Activated T-helper 2 cell treated with anti-CD3 and anti-CD28 coated beads, Interferon-gamma antibody, Interleukin-2, Interleukin-4, amounts not matched to agents 10 μg/mL and 5 μg/mL and 100 μg/mL, durations not matched to agents 14 hours and 24 hours and 36 hours (primary cell): ENCODE measurements at regions of chr14 and their contacts with region 1.

Region 1: DNA sequence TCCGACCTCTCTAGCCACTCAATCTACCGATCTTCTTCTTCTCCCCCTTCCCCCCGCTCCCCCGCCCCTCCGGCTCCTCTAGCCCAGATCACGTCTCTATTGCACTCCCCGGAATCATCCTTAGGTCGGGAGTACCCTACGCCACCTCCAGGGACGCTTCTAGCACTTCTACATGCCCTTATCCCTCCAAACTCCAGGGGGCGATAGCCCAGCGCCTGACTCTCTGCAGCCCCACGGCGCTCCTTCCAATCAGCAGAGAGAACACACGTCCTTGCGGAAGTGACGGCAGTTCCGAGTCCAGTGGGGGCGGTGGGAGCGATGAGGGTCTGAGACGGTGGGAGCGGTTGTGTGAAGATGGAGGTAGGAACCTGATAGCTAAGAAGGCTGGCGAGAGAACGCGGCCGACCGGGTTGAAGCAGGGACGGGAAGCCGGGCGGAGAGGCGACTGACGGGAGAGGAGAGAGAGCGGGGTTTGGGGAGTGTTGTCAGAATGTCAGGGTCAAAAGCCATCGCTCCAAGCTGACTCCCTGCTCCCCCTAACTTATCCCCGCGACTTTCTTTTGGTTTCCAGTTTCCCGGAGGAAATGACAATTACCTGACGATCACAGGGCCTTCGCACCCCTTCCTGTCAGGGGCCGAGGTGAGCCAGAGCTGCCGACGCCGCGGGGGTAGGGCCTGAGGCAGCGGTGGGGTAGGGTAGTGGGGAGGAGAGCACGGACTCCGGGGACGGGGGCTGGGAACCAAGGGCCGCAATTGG is at the starts of genes RAB2B and TOX4:
- DNase-seq: peak; percentile 97
- H3K4me3 Mint-ChIP-seq: peak within 1 kb of the TSS; percentile 99
- H3K27ac Mint-ChIP-seq: peak within 1 kb of the TSS; percentile 99
- H3K4me1 Mint-ChIP-seq: peaks cover 18% of the 10 kb centered on the region
- H3K27me3 Mint-ChIP-seq: no peaks in the 10 kb centered on the region
- total RNA-seq, gene RAB2B: 27.4 and 30.5 TPM in 2 replicates
- total RNA-seq, gene TOX4: 68.1 and 70.1 TPM in 2 replicates

Region 2: DNA sequence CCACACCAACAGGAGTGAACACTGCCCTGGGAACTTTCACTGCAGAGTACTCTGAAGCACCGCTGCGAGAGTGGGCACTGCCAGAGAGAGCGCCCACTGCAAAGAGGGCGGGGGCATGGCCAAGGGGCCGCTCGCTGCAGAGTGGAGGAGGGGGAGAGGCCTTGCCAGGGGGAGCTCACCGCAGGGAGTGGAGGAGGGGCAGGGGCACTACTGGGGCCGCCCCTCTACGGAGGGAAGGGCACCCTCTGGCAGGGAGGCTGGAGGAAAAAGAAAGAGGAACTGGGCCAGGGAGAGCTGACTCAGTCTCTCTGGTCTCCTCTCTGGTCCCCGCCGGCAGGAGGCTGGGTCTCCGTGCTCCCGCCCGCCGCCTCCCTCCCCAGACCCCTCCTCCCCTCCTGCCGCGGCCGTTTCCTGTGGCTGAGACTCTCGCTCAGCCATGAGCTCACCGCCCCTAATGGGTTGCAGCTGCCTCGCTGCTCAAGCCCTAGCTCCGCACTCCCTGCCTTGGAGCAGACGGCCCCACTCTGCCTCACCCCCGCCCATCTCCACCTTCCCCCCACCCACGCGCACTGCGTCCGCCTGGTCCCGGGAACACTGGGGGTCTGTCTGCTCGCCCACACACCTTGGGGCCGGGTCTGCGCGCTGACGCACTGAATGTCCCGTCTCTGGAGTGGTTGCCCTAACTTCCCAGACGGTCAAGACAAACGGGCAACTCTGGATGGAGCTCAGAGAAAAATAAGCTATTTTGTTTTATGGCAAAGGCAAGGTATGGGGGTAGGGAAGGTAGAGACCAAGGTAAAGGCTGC is 405.7 kb before region 1 on chr14:
- intact Hi-C with region 1: no loop called
- DNase-seq: peak; percentile 24
- H3K4me3 Mint-ChIP-seq: peak overlapping the region; percentile 72
- H3K27ac Mint-ChIP-seq: no peak overlapping the region
- H3K4me1 Mint-ChIP-seq: peaks cover 30% of the 10 kb centered on the region
- H3K27me3 Mint-ChIP-seq: peaks cover 66% of the 10 kb centered on the region

Region 3: GRCh38 chr14:21269252-21270046 is 207.7 kb before region 1 on chr14 and contains the start of gene HNRNPC:
- intact Hi-C with region 1: loop called (anchors 1 kb)
- DNase-seq: peak; percentile 100
- H3K4me3 Mint-ChIP-seq: peak within 1 kb of the TSS; percentile 99
- H3K27ac Mint-ChIP-seq: peak within 1 kb of the TSS; percentile 100
- H3K4me1 Mint-ChIP-seq: peaks cover 29% of the 10 kb centered on the region
- H3K27me3 Mint-ChIP-seq: no peaks in the 10 kb centered on the region
- total RNA-seq, gene HNRNPC: 972 and 976 TPM in 2 replicates

Region 4: GRCh38 chr14:21367582-21368144 is 109.4 kb before region 1 on chr14:
- intact Hi-C with region 1: no loop called
- DNase-seq: no peak
- H3K4me3 Mint-ChIP-seq: no peak overlapping the region
- H3K27ac Mint-ChIP-seq: no peak overlapping the region
- H3K4me1 Mint-ChIP-seq: peaks cover 9% of the 10 kb centered on the region
- H3K27me3 Mint-ChIP-seq: no peaks in the 10 kb centered on the region

Region 5: GRCh38 chr14:21437063-21437901 is 39.8 kb before region 1 on chr14:
- intact Hi-C with region 1: loop called (anchors 1 kb)
- DNase-seq: peak; percentile 95
- H3K4me3 Mint-ChIP-seq: peak overlapping the region; percentile 88
- H3K27ac Mint-ChIP-seq: peak overlapping the region; percentile 79
- H3K4me1 Mint-ChIP-seq: peaks cover 54% of the 10 kb centered on the region
- H3K27me3 Mint-ChIP-seq: no peaks in the 10 kb centered on the region

Region 6: GRCh38 chr14:21510735-21511657 is 33.9 kb after region 1 on chr14 and contains the start of gene METTL3:
- intact Hi-C with region 1: loop called (anchors 1 kb)
- DNase-seq: peak; percentile 91
- H3K4me3 Mint-ChIP-seq: peak within 1 kb of the TSS; percentile 88
- H3K27ac Mint-ChIP-seq: peak within 1 kb of the TSS; percentile 97
- H3K4me1 Mint-ChIP-seq: peaks cover 28% of the 10 kb centered on the region
- H3K27me3 Mint-ChIP-seq: peaks cover 5% of the 10 kb centered on the region
- total RNA-seq, gene METTL3: 76.7 and 80.5 TPM in 2 replicates

Region 7: DNA sequence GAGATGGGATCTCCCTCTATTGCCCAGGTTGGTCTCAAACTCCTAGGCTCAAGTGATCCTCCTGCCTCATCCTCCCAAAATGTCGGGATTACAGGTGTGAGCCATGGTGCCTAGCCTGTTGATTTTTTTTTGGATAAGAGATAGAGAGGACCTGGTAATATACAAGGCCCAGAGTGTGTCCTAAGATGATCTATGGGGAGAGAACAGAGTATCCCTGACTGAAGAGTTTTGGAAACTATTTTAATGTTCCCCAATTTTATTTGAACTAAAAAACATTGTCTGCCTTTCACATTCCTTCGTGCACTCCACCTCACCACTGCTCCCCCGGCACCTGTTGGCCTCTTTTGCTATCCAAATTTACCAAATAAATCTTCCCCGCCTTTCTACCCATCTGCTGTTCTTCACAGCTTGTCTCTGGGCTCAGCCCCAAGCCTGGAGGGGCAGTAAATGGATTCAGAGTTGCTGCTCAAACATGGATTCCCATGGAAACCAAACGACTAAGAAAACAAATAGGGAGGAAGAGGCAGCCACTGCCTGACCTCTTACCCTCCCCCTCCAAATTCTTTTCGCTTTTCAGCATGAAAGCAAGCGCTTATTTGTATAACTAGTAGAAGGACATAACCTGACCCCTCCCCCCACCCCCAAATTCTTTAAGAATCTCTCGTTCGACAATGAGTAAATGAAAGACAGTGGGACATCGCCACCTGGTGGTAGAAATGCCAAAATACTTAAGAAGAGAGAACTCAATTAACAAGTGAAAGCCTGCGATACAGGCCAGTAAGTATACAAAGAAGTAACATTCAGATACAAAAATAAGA is 80.2 kb after region 1 on chr14:
- intact Hi-C with region 1: loop called (anchors 1 kb)
- DNase-seq: peak; percentile 55
- H3K4me3 Mint-ChIP-seq: no peak overlapping the region
- H3K27ac Mint-ChIP-seq: peak overlapping the region; percentile 19
- H3K4me1 Mint-ChIP-seq: peaks cover 4% of the 10 kb centered on the region
- H3K27me3 Mint-ChIP-seq: no peaks in the 10 kb centered on the region